Left cardiac atrium (tissue), 4 donors: ENCODE measurements at regions of chr2 and their contacts with region 1.

Region 1: GRCh38 chr2:43269074-43269572 is 42.7 kb upstream of the ZFP36L2 start:
- DNase-seq: peak; percentile 93
- ATAC-seq: peak; percentile 73 to 91

Region 2: DNA sequence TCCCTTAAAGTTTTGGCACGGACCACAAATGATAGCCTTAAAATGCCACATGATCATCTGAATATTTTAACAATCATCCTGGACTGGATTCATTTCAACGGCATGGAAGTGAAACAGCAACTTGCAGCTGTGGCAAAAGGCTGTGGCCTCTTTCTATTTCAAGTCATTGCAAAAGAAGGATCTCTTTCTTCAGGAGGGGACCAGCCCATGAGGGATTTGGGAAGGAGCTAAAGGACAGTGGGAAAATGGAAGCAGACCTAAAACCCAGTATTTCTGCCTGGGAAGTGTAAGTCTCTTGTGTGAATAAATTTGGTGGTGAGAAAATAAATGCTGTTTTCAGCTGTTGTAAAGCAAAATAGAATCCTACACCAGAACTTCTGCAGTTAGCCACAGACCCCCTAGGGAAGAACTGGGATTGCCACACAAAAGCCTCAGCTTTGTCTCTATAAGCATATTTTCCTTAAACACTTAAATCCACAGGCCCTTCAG is 64.6 kb after region 1 on chr2:
- intact Hi-C with region 1: loop called in 1 of 2 experiments (anchors 5 kb)
- DNase-seq: peak; percentile 26
- ATAC-seq: peak; percentile 39 to 48